ENCODE measurements at regions of chr6 and their contacts with region 1.

Region 1: GRCh38 chr6:31739639-31740396 is at the start of gene MSH5:
- DNase-seq: peak; percentile 98
- H3K4me3 Mint-ChIP-seq: peak within 1 kb of the TSS; percentile 99
- H3K27ac Mint-ChIP-seq: peak within 1 kb of the TSS; percentile 95
- H3K4me1 Mint-ChIP-seq: peaks cover 52% of the 10 kb centered on the region
- H3K27me3 Mint-ChIP-seq: no peaks in the 10 kb centered on the region
- total RNA-seq, gene MSH5: 60.1 to 63.2 TPM

Region 2: DNA sequence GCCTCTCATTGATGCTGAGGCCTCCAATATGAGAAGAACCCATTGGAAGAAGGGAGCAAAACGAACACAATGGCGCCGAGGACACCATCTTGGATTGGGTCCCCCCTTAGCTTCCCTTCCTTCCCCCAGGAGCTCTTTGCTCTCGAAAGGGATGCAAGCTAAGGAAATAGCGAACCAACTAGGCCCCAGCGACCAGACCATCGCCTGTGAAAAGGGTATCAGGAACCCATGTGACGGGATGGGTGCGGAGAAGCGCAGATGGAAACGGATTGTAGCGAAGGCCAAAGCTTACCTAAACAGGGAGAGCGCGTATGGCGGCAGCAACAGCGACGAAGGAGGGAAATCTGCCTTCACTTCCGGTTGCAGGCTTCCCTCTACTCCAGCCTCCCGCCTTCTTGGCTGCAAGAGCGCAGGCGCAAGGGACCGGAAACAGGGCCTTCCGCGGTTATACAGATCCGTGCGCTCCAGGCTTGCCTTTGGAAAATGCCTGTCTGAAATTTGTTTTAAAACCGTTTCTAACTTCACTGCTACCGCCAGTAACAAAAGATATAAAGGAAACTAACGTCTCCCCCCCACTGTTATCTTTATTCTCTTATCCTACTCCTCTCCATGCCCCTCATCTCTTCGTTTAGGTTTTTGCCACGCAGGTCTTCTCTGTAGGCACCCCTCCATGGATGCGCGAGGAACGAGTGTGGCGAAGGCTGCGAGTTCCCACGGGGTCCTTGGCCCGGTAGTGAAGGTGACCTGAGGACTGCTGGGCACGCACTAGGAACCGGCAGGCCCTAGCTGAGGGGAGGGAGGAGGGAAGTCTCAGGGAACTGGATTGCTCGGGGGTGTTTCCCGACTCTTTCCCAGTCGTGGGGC is 197.9 kb before region 1 on chr6 and contains the start of gene DDX39B:
- CTCF ChIA-PET with region 1: no interaction called
- POLR2A ChIA-PET with region 1: interaction called, 28 read pairs
- DNase-seq: peak; percentile 94
- H3K4me3 Mint-ChIP-seq: peak within 1 kb of the TSS; percentile 89
- H3K27ac Mint-ChIP-seq: peak within 1 kb of the TSS; percentile 75
- H3K4me1 Mint-ChIP-seq: peaks cover 52% of the 10 kb centered on the region
- H3K27me3 Mint-ChIP-seq: no peaks in the 10 kb centered on the region
- total RNA-seq, gene DDX39B: 427 to 434 TPM

Region 3: GRCh38 chr6:31652925-31653718 is 86.7 kb before region 1 on chr6:
- CTCF ChIA-PET with region 1: interaction called, 20 read pairs
- POLR2A ChIA-PET with region 1: interaction called, 43 read pairs
- DNase-seq: no peak
- H3K4me3 Mint-ChIP-seq: peak overlapping the region; percentile 97
- H3K27ac Mint-ChIP-seq: peak overlapping the region; percentile 98
- H3K4me1 Mint-ChIP-seq: peaks cover 66% of the 10 kb centered on the region
- H3K27me3 Mint-ChIP-seq: no peaks in the 10 kb centered on the region

Region 4: DNA sequence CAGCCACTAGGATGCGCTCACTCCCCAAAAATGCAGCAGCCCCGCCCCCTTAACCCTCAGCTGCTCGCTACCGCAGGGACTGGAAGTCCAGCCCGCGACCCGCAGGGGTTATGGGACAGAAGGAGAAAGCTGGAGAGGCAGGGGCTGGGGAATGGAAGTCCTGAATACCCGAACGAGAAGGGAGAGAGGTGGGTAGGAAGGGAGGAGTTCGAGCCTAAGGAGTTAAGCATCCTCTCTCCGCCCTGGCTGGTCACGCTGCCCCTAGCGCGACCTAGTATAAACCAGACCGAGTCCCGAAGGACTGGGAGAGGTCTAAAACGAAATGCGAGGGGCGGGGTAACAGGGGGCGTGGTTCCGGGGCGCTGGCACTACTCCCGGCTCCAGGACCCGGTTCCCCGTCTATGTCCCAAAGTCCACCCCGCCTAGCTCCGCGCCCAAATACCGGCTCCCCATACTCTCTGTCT is 10.3 kb before region 1 on chr6:
- CTCF ChIA-PET with region 1: interaction called, 38 read pairs
- POLR2A ChIA-PET with region 1: interaction called, 58 read pairs
- DNase-seq: peak; percentile 82
- H3K4me3 Mint-ChIP-seq: peak overlapping the region; percentile 88
- H3K27ac Mint-ChIP-seq: peak overlapping the region; percentile 82
- H3K4me1 Mint-ChIP-seq: peaks cover 79% of the 10 kb centered on the region
- H3K27me3 Mint-ChIP-seq: no peaks in the 10 kb centered on the region

Region 5: GRCh38 chr6:31795616-31796298 is 55.9 kb after region 1 on chr6 and contains the start of gene VARS1:
- CTCF ChIA-PET with region 1: interaction called, 18 read pairs
- POLR2A ChIA-PET with region 1: interaction called, 104 read pairs
- DNase-seq: peak; percentile 86
- H3K4me3 Mint-ChIP-seq: peak within 1 kb of the TSS; percentile 89
- H3K27ac Mint-ChIP-seq: peak within 1 kb of the TSS; percentile 97
- H3K4me1 Mint-ChIP-seq: peaks cover 58% of the 10 kb centered on the region
- H3K27me3 Mint-ChIP-seq: no peaks in the 10 kb centered on the region
- total RNA-seq, gene VARS1: 84.1 to 88.4 TPM

Region 6: GRCh38 chr6:31827286-31828079 is 87.7 kb after region 1 on chr6 and contains the start of gene HSPA1B:
- CTCF ChIA-PET with region 1: interaction called, 61 read pairs
- POLR2A ChIA-PET with region 1: interaction called, 119 read pairs
- DNase-seq: peak; percentile 97
- H3K4me3 Mint-ChIP-seq: peak within 1 kb of the TSS; percentile 86
- H3K27ac Mint-ChIP-seq: peak within 1 kb of the TSS; percentile 96
- H3K4me1 Mint-ChIP-seq: peaks cover 54% of the 10 kb centered on the region
- H3K27me3 Mint-ChIP-seq: no peaks in the 10 kb centered on the region
- total RNA-seq, gene HSPA1B: 60.6 to 62.6 TPM

Measured in activated CD4-positive, alpha-beta memory T cell treated with anti-CD3 and anti-CD28 coated beads, Interleukin-2, amount 10 ng/mL, durations not matched to agents 7 days and 5 days (primary cell).